Activated B cell treated with CpG ODN at 0.5 μM for 24 hours (primary cell): ENCODE measurements at regions of chr14 and their contacts with region 1.

Region 1: GRCh38 chr14:22556990-22557623 is 31.9 kb downstream of the DAD1 start:
- DNase-seq: peak; percentile 90
- ATAC-seq: peak; percentile 43
- H3K4me3 Mint-ChIP-seq: peak overlapping the region; percentile 80
- H3K27ac Mint-ChIP-seq: peak overlapping the region; percentile 98
- H3K4me1 Mint-ChIP-seq: peaks cover 88% of the 10 kb centered on the region
- H3K27me3 Mint-ChIP-seq: peaks cover 4% of the 10 kb centered on the region
- CTCF ChIP-seq: peak; percentile 100

Region 2: DNA sequence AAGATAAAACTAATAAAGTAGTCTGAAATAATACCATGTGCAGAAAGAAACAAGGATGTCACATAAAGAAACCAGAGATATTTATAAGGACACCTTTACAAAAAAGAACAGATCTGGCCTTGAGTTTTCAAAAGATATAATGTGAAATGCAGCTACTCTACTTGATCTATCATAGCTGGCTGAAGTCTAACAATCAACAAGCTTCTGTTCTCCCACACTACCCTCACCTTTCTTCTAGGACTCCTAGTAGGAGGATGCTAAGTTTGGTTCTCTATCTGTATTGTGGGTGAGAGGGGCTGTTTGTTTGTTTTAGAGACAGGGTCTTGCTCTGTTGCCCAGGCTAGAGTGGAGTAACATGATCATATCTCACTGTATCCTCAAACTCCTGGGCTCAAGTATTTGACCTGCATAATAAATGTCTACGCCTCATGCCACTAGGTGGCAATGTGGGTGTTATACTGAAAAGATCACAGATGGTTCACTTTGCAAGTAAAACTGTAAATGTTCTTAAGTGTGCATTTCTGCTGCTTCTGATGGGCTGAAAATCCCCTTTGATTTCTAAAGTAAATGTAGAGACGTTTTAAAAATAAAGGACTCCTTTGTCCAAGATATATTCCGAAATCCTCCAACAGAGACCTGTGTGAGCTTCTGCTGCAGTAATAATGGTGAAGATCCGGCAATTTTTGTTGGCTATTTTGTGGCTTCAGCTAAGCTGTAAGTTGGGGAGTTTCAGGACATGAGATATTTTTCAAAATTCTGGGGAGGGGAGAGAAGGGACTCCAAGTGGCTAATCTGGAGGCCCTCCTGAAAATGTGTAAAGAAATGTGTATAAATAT is 237.4 kb before region 1 on chr14:
- CTCF ChIA-PET with region 1: interaction called, 13 read pairs
- POLR2A ChIA-PET with region 1: interaction called, 3 read pairs
- intact Hi-C with region 1: loop called (anchors 1 kb)
- DNase-seq: no peak
- ATAC-seq: peak; percentile 77
- H3K4me3 Mint-ChIP-seq: no peak overlapping the region
- H3K27ac Mint-ChIP-seq: no peak overlapping the region
- H3K4me1 Mint-ChIP-seq: no peaks in the 10 kb centered on the region
- H3K27me3 Mint-ChIP-seq: peaks cover 4% of the 10 kb centered on the region
- CTCF ChIP-seq: no peak

Region 3: DNA sequence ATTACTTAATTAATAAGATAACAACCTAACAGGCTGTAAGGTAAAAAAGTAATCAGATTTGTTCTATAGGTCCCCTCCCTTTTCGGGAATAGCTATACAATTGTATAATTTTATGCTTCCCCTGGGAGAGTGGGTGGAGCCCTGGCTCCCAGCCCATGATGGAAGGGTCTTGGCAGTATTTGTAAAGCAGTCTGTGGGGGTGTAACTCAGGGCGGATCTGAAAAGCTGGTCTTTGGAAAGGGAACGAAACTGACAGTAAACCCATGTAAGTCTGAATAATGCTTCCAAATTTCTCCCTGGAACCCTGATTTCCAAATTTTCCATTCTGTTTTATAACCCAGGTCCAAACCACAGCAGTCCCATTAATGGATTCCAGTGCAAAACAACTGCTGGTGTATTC is 78.4 kb before region 1 on chr14:
- CTCF ChIA-PET with region 1: interaction called, 52 read pairs
- POLR2A ChIA-PET with region 1: interaction called, 243 read pairs
- intact Hi-C with region 1: loop called (anchors 1 kb)
- DNase-seq: no peak
- ATAC-seq: no peak
- H3K4me3 Mint-ChIP-seq: peak overlapping the region; percentile 42
- H3K27ac Mint-ChIP-seq: peak overlapping the region; percentile 85
- H3K4me1 Mint-ChIP-seq: peaks cover 98% of the 10 kb centered on the region
- H3K27me3 Mint-ChIP-seq: no peaks in the 10 kb centered on the region
- CTCF ChIP-seq: no peak

Region 4: DNA sequence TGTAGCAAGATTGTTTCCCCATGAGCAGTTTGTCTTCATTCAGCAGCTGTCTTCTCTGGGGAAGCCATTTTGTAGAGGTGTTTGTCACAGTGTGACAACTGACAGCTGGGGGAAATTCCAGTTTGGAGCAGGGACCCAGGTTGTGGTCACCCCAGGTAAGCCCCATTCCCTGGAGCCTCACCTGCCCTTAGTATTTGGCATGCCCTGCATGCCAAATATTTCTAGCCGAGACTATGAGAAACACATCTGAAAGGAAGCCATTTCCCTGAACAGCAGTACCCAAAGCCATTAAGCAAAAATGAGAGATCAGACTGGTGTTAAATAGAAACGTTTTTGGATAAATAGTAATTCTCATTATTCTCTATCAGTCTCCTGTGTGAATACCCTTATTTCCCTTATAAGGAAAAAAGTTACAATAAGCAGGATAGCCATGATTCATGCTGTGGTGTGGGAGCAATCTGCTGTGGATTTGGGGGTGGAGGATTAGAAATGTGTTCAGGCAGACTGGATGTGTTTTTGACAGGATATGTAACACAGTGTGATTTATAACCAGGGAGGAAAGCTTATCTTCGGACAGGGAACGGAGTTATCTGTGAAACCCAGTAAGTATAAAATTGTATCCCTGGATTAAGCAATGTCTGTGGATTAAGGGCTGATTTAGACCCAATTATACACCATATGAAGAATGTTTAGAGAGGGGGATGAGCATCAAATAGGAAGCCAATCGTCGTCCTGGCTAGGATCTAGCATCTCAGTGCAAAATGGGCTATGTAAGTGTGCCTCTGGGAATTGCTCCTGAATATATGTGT is 37.0 kb before region 1 on chr14:
- CTCF ChIA-PET with region 1: interaction called, 9 read pairs
- POLR2A ChIA-PET with region 1: interaction called, 29 read pairs
- intact Hi-C with region 1: loop called (anchors 1 kb)
- DNase-seq: no peak
- ATAC-seq: no peak
- H3K4me3 Mint-ChIP-seq: peak overlapping the region; percentile 52
- H3K27ac Mint-ChIP-seq: peak overlapping the region; percentile 88
- H3K4me1 Mint-ChIP-seq: peaks cover 94% of the 10 kb centered on the region
- H3K27me3 Mint-ChIP-seq: no peaks in the 10 kb centered on the region
- CTCF ChIP-seq: no peak

Region 5: DNA sequence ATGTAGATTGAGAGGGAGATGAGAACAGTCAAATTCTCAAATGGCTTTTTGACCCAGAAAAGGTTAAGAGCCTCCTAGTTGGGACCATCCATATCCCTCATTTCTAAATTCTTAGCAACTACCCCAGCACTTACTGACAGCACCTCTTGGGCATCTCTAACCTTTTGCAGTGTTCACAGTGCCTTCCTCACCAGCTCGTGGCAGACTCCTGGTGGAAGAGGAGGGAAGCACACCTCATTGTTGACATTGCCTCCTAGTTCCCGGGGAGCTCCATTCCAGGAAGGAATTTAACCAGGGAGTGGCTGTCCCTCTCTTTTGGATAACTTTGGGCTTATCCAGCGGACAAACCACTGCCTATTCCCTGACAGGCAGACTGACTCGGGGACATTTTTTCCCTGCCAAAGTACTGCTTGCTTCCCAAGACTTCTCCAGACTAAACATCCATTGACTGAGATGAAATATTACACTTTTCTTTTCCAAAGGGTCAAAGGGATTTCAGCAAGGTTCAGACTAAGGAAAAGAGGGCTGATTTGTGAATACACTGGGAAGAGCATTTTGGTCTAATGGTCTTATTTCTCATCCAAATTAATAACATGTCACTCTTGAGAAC is 96.0 kb after region 1 on chr14:
- CTCF ChIA-PET with region 1: interaction called, 11 read pairs
- POLR2A ChIA-PET with region 1: interaction called, 3 read pairs
- intact Hi-C with region 1: loop called (anchors 1 kb)
- DNase-seq: no peak
- ATAC-seq: peak; percentile 78
- H3K4me3 Mint-ChIP-seq: no peak overlapping the region
- H3K27ac Mint-ChIP-seq: no peak overlapping the region
- H3K4me1 Mint-ChIP-seq: no peaks in the 10 kb centered on the region
- H3K27me3 Mint-ChIP-seq: no peaks in the 10 kb centered on the region
- CTCF ChIP-seq: no peak

Region 6: DNA sequence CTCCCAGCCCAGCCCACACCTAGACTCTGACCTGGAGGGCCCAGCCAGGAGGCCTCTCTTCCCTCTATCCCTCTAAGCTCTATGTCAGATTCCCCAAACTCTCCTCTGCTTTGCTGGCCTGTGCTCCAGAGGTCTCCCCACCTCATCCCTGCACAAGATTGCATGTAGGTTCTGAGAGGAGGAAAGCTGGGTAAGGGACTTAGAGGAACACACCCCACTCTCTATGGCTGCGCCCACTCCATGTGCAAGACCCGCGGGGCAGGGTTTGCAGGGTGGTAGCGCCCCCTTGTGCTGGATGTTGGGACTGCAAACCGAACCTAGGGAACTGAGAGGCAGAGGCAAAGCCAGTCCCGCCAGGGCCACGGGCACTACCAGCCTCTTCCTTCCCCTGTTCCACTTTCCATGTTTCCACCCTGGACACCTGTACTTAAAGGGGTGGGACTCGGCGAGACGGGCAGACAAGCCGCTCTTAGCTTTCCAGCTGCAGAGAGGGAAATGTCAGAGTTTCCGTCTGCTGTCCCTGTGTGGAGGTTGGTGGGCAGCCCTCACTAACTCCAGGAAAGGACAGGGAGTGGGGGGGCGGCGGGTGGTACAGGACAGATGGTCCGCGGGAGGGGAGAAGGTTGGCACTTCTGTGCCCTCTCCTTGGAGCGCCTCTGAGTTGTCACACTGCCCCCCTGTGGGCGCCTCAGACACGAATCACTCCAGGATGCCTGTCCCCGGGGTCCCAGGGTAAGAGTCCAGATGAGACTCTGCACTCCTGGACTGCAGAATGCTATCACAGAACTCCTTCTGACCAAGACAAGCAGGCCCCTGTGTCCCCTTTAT is 296.0 kb after region 1 on chr14:
- CTCF ChIA-PET with region 1: interaction called, 15 read pairs
- POLR2A ChIA-PET with region 1: interaction called, 3 read pairs
- intact Hi-C with region 1: loop called (anchors 1 kb)
- DNase-seq: peak; percentile 97
- ATAC-seq: peak; percentile 94
- H3K4me3 Mint-ChIP-seq: peak overlapping the region; percentile 79
- H3K27ac Mint-ChIP-seq: peak overlapping the region; percentile 78
- H3K4me1 Mint-ChIP-seq: peaks cover 6% of the 10 kb centered on the region
- H3K27me3 Mint-ChIP-seq: peaks cover 6% of the 10 kb centered on the region
- CTCF ChIP-seq: peak; percentile 81

Region 7: GRCh38 chr14:22986508-22987054 is 429.5 kb after region 1 on chr14:
- CTCF ChIA-PET with region 1: interaction called, 8 read pairs
- POLR2A ChIA-PET with region 1: no interaction called
- intact Hi-C with region 1: loop called (anchors 1 kb)
- DNase-seq: peak; percentile 70
- ATAC-seq: peak; percentile 62
- H3K4me3 Mint-ChIP-seq: no peak overlapping the region
- H3K27ac Mint-ChIP-seq: no peak overlapping the region
- H3K4me1 Mint-ChIP-seq: no peaks in the 10 kb centered on the region
- H3K27me3 Mint-ChIP-seq: no peaks in the 10 kb centered on the region
- CTCF ChIP-seq: peak; percentile 91